ENCODE measurements at regions of chr15 and their contacts with region 1.

Region 1: DNA sequence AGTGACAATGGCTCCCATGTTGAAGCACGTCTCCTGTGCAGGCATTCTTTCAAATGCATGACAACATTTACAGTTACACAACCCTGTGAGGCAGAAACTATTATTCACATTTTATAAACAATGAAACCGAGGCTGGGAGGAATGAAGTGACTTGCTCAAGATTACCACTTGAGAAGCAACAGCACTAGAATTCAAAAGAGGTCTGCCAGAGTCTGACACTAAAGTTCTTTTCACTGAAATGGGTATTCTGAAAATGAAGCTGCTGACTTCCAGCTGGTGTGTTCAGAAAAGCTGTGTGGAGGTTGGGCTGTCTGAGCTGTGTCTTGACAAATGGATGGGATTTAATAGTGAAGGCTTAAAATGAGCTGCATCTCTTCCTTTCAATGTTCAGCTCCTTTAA is 104.4 kb downstream of the THSD4 start:
- DNase-seq: peak; percentile 86
- H3K4me3 ChIP-seq: no peak overlapping the region
- H3K27ac ChIP-seq: peak overlapping the region; percentile 70
- H3K4me1 ChIP-seq: peaks cover 38% of the 10 kb centered on the region
- H3K27me3 ChIP-seq: no peaks in the 10 kb centered on the region
- CTCF ChIP-seq: no peak

Region 2: DNA sequence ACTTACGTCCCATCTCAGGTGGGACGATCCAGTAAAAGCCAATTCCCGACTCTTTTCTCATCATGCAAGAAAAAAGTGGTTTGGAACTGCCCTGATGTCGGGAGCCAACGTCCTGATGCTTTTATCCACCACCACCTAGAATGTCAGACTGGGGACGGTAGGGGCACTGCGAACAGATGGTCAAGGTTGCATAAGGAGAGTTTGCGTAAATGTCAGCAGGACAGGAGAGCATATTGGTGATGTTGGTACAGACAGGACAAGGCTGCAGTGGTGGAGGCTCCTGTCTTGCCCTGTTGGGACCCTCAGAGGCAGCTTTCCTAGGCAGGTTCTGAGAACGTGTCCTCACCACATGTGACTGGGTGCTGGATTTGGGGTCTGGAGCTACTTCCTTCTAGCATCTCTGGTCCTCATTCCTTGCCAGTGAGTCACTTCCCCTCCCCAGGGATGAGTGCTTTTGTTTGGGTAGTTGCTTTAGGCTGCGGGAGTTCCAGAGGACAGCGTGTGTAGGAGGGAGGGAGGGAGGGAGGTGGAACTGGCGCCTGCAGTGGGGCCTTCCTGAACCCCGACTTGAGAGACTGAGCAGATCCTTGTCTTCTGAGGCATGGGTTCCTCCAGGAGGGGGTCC is 83.4 kb before region 1 on chr15:
- CTCF ChIA-PET with region 1: no interaction called
- dilution Hi-C with region 1: no loop called
- in situ Hi-C with region 1: no loop called
- intact Hi-C with region 1: loop called (anchors 5 kb)
- DNase-seq: peak; percentile 85
- H3K4me3 ChIP-seq: no peak overlapping the region
- H3K27ac ChIP-seq: peak overlapping the region; percentile 87
- H3K4me1 ChIP-seq: peaks cover 54% of the 10 kb centered on the region
- H3K27me3 ChIP-seq: no peaks in the 10 kb centered on the region
- CTCF ChIP-seq: no peak